ENCODE measurements at regions of chr2 and their contacts with region 1.

Region 1: GRCh38 chr2:6896930-6897759 is 19.6 kb downstream of the RSAD2 start:
- DNase-seq: no peak
- H3K4me3 ChIP-seq: no peak overlapping the region
- H3K27ac ChIP-seq: no peak overlapping the region
- H3K4me1 ChIP-seq: no peaks in the 10 kb centered on the region
- H3K27me3 ChIP-seq: no peaks in the 10 kb centered on the region
- CTCF ChIP-seq: peak; percentile 59

Region 2: DNA sequence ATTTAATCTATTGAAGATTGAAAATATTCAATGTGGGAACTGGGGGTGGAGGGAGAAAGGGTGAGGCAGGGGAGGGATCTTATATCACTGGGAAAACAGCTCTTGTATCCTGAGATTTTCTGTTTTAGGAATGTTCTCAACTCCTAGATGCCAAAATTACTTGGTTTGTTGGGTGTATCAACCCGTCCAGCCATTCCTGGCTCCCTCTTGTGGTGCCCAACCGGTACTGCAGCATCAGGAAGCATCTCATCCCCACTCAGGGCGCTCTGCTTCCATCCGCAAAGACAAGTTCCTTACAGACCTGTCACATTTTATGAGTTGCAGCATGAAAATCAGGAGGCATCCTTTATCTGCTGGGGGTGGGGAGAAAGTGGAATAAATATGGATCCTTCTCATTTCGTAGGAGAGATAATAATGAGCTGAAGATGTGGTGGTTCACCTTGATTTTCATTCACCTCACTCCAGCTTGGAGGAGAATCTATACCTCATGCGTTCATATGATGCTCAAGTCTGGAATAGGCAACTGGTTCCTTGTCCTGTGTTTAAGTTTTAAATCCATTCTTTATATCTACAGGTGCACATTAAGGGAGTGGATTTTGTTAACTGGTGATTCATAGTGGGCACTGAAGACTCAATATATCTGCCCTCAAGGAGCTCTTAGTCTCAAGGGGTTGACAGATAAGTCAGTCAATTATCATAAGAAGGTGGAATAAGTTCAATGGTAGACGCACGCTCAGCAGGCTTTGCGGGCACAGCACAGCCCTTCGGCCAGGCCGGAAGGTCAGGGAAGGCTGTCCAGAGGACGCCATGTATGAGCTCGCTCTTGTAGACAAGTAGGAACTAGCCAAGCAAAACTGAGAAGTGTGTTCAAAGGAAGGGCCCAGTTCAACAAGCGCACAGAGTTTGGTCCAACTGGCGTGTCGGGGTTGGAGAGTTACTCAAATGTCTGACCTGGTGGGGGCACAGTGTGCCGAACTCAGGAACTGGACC is 147.4 kb after region 1 on chr2:
- intact Hi-C with region 1: loop called (anchors 5 kb)
- DNase-seq: peak; percentile 70
- H3K4me3 ChIP-seq: no peak overlapping the region
- H3K27ac ChIP-seq: no peak overlapping the region
- H3K4me1 ChIP-seq: no peaks in the 10 kb centered on the region
- H3K27me3 ChIP-seq: no peaks in the 10 kb centered on the region
- CTCF ChIP-seq: peak; percentile 97